Caco-2 (cell line): ENCODE measurements at regions of chr4 and their contacts with region 1.

Region 1: DNA sequence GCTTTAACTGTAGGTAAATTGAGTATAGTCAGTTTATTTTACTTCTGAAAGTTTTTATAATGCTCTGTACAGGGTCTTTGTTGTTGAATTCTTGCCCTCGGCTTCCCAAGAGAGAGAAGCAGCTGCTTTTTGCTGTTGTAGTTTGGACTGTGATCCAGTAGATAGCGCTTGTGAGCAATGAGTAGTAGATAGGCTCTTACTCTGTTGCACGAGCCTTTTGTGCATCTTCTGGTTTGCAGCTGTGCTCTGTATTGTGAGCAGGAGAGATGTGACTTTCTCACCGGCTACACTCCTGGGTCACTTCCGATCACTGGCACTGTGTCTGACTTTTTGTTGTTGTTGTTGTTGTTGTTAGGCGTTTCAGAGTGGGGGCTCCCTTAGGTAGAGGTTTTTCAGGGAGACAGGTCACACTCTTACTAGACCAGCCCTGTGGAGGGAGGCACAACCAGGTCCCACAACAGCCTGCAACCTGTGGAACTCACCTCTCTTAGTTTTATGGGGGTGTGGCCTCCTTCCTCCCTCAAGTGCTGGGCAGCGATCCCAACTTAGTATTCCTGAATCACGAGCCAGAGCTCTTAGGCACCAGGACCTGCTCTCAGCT is 822.1 kb upstream of the GALNTL6 start:
- DNase-seq: peak; percentile 35
- H3K4me3 ChIP-seq: no peak overlapping the region
- H3K4me3 Mint-ChIP-seq: no peak overlapping the region
- H3K27ac Mint-ChIP-seq: no peak overlapping the region
- H3K4me1 ChIP-seq: no peaks in the 10 kb centered on the region
- H3K4me1 Mint-ChIP-seq: no peaks in the 10 kb centered on the region
- H3K27me3 ChIP-seq: no peaks in the 10 kb centered on the region
- H3K27me3 Mint-ChIP-seq: no peaks in the 10 kb centered on the region
- CTCF ChIP-seq: peak; percentile 49 to 51

Region 2: DNA sequence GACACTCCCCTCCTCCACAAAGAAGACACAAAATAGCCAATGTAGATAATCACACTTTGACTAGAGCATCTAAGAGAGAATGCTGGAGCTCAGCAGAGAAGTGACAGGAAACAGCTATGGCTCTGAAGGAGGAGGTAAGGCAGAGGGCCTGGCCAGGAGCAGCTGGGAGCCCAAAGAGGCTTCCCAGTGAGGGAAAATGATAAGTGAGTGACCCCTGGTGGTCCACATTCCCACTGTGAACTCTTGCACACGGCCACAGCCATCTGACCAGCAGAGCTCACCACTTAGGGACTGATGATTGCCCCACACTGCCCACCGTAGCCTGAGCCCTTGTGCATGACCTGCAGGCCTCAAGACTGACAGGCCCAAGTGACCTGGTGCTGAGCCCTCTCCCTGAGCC is 659.5 kb after region 1 on chr4:
- CTCF ChIA-PET with region 1: no interaction called
- POLR2A ChIA-PET with region 1: no interaction called
- intact Hi-C with region 1: loop called (anchors 5 kb)
- DNase-seq: peak in 1 of 2 experiments; percentile 10
- H3K4me3 ChIP-seq: no peak overlapping the region
- H3K4me3 Mint-ChIP-seq: no peak overlapping the region
- H3K27ac Mint-ChIP-seq: no peak overlapping the region
- H3K4me1 ChIP-seq: no peaks in the 10 kb centered on the region
- H3K4me1 Mint-ChIP-seq: no peaks in the 10 kb centered on the region
- H3K27me3 ChIP-seq: no peaks in the 10 kb centered on the region
- H3K27me3 Mint-ChIP-seq: no peaks in the 10 kb centered on the region
- CTCF ChIP-seq: peak in 1 of 2 experiments; percentile 6

Region 3: DNA sequence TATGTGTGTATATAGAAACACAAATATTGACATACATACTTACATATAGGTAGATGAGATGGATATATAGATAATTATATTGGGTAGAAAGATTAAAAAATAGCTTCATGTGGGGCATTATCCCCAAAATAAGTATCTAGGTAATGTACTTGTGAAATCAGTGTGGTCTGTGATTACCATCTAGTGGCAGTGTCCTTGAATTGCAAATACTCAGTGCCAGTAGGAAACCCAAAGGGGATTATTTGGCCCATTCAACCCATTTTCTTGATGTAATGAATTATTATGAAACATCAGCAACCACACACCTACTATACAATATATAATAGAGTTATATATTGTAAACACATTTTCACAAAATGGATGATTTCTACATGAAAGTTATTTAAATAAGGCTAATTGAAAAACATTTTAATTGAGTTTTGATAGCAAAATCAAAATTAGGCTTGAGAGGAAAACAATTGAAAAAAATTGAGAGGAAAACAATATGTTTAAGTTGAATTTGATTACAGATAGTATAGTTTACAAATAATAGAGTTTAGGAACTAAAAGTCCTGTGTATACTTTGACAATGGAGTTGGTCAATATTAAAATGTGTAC is 1211.5 kb after region 1 on chr4:
- CTCF ChIA-PET with region 1: interaction called, 4 read pairs
- POLR2A ChIA-PET with region 1: no interaction called
- intact Hi-C with region 1: loop called (anchors 2 kb)
- DNase-seq: peak in 1 of 2 experiments; percentile 22
- H3K4me3 ChIP-seq: no peak overlapping the region
- H3K4me3 Mint-ChIP-seq: no peak overlapping the region
- H3K27ac Mint-ChIP-seq: no peak overlapping the region
- H3K4me1 ChIP-seq: no peaks in the 10 kb centered on the region
- H3K4me1 Mint-ChIP-seq: peaks cover 7% of the 10 kb centered on the region
- H3K27me3 ChIP-seq: no peaks in the 10 kb centered on the region
- H3K27me3 Mint-ChIP-seq: no peaks in the 10 kb centered on the region
- CTCF ChIP-seq: peak; percentile 42 to 43